Activated CD4-positive, alpha-beta T cell treated with anti-CD3 and anti-CD28 coated beads for 36 hours (primary cell): ENCODE measurements at regions of chr4 and their contacts with region 1.

Region 1: DNA sequence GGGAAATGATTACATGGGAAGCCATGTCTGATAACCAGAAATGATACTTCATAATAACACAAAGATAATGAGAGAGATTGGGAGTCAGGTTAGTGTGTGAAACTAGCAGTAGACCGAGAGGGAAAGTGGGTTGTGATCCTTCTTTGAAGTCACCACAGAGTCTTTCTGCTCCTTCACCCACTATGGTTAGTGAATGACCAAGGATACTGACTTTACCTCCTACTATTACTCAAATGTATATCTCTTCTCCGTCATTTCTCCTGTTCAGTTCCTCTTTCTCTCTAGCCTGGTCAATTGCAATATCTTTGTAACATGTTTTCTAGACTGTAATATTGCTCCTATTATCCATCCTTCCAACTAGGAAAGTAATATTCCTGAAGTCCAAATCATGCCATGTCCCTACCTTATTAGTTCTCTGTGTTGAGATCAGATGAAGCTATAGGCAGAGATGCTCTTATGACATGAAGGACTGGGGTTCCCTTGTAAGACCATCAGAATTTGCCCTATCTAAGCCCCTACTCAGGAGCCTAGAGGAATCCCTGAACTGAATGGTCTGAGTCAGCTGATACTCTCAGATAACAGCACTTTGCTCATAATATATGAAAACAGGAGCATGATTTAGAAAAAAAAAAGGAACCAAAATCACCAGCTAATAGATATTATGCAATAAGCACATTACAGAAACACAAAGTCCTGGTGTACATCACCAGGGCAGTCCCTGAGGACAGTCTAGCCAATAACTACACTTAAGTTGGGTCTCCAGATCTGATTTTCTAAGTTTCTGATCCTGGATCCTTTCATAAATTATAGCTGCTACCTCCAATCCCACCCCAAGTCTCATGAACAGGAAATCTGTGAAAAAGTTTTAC is 81.2 kb downstream of the SHROOM3 start:
- DNase-seq: no peak
- ATAC-seq: no peak
- H3K4me3 Mint-ChIP-seq: no peak overlapping the region
- H3K27ac Mint-ChIP-seq: no peak overlapping the region
- H3K4me1 Mint-ChIP-seq: no peaks in the 10 kb centered on the region
- H3K27me3 Mint-ChIP-seq: no peaks in the 10 kb centered on the region

Region 2: GRCh38 chr4:76748649-76749048 is 232.4 kb after region 1 on chr4:
- CTCF ChIA-PET with region 1: no interaction called
- POLR2A ChIA-PET with region 1: no interaction called
- intact Hi-C with region 1: loop called (anchors 1 to 2 kb)
- DNase-seq: peak; percentile 63
- ATAC-seq: no peak
- H3K4me3 Mint-ChIP-seq: no peak overlapping the region
- H3K27ac Mint-ChIP-seq: no peak overlapping the region
- H3K4me1 Mint-ChIP-seq: peaks cover 11% of the 10 kb centered on the region
- H3K27me3 Mint-ChIP-seq: peaks cover 33% of the 10 kb centered on the region

Region 3: DNA sequence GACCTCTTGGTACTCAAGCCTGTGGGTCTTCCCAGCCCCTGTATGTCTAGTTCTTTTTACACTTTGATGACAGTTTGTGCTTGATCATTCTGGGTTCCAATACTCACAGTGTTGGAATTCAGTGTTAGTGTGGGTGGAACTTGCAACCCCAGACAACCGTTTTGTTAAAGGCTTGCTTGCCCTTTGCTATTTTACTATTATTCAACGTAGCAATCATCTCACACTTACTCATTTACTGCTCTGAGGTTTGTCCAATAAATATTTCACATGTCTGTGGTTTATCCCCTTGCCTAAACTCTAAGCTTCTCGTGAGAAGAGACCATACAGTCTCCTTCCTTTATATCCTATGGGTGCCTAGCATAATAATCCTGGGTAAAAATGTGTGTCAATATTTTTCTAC is 656.1 kb after region 1 on chr4:
- CTCF ChIA-PET with region 1: no interaction called
- POLR2A ChIA-PET with region 1: interaction called, 10 read pairs
- intact Hi-C with region 1: no loop called
- DNase-seq: no peak
- ATAC-seq: no peak
- H3K4me3 Mint-ChIP-seq: no peak overlapping the region
- H3K27ac Mint-ChIP-seq: no peak overlapping the region
- H3K4me1 Mint-ChIP-seq: no peaks in the 10 kb centered on the region
- H3K27me3 Mint-ChIP-seq: no peaks in the 10 kb centered on the region

Region 4: GRCh38 chr4:77358315-77358928 is 842.2 kb after region 1 on chr4:
- CTCF ChIA-PET with region 1: no interaction called
- POLR2A ChIA-PET with region 1: no interaction called
- intact Hi-C with region 1: loop called in 1 of 2 experiments (anchors 5 kb)
- DNase-seq: peak; percentile 10
- ATAC-seq: peak; percentile 42
- H3K4me3 Mint-ChIP-seq: no peak overlapping the region
- H3K27ac Mint-ChIP-seq: no peak overlapping the region
- H3K4me1 Mint-ChIP-seq: no peaks in the 10 kb centered on the region
- H3K27me3 Mint-ChIP-seq: no peaks in the 10 kb centered on the region